Activated CD8-positive, alpha-beta T cell treated with anti-CD3 and anti-CD28 coated beads, Interleukin-2, amount 10 ng/mL, durations not matched to agents 7 days and 5 days (primary cell): ENCODE measurements at regions of chr16 and their contacts with region 1.

Region 1: GRCh38 chr16:27972500-27972899 is 91.0 kb downstream of the GSG1L start:
- DNase-seq: peak; percentile 79
- ATAC-seq: peak; percentile 93
- H3K4me3 Mint-ChIP-seq: no peak overlapping the region
- H3K27ac Mint-ChIP-seq: no peak overlapping the region
- H3K4me1 Mint-ChIP-seq: peaks cover 7% of the 10 kb centered on the region
- H3K27me3 Mint-ChIP-seq: peaks cover 26% of the 10 kb centered on the region

Region 2: DNA sequence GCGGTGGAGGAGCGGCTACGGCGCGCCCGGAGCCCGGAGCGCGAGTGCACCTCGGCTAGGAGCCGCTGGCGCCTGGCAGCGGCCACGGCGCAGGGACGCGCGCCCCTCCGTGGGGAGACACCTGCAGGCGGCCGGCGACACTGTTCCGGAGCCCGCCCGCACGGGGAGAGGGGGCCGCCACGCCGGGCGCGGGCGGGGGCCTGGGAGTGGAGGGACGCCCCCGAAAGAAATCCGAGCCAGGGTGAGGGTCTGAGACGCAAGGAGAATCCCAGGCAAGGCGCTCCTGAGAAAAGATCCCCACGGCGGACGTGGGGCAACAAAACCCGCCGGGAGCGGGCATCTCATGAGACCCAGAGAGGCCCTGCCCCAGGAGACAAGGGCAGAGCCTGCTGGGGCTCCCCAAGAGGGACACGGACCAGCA is 91.2 kb after region 1 on chr16 and contains the start of gene GSG1L:
- CTCF ChIA-PET with region 1: interaction called, 103 read pairs
- POLR2A ChIA-PET with region 1: no interaction called
- DNase-seq: no peak
- ATAC-seq: peak; percentile 75
- H3K4me3 Mint-ChIP-seq: peak within 1 kb of the TSS; percentile 28
- H3K27ac Mint-ChIP-seq: no peak within 1 kb of the TSS
- H3K4me1 Mint-ChIP-seq: peaks cover 2% of the 10 kb centered on the region
- H3K27me3 Mint-ChIP-seq: peaks cover 47% of the 10 kb centered on the region
- total RNA-seq, gene GSG1L: 0.08 to 0.39 TPM

Region 3: GRCh38 chr16:28181515-28181914 is 209.0 kb after region 1 on chr16:
- CTCF ChIA-PET with region 1: no interaction called
- POLR2A ChIA-PET with region 1: no interaction called
- DNase-seq: no peak
- ATAC-seq: no peak
- H3K4me3 Mint-ChIP-seq: no peak overlapping the region
- H3K27ac Mint-ChIP-seq: peak overlapping the region; percentile 74
- H3K4me1 Mint-ChIP-seq: peaks cover 72% of the 10 kb centered on the region
- H3K27me3 Mint-ChIP-seq: no peaks in the 10 kb centered on the region